ENCODE measurements at regions of chr17 and their contacts with region 1.

Region 1: GRCh38 chr17:63600569-63601438 is at the start of gene TACO1:
- DNase-seq: peak; percentile 57 to 86 (median 73)
- ATAC-seq: peak; percentile 84
- H3K4me3 ChIP-seq: peak within 1 kb of the TSS; percentile 94
- H3K4me3 Mint-ChIP-seq: peak within 1 kb of the TSS; percentile 90
- H3K27ac ChIP-seq: peak within 1 kb of the TSS; percentile 60 to 69
- H3K27ac Mint-ChIP-seq: peak within 1 kb of the TSS; percentile 87
- H3K4me1 ChIP-seq: peaks cover 45% of the 10 kb centered on the region
- H3K4me1 Mint-ChIP-seq: peaks cover 40% of the 10 kb centered on the region
- H3K27me3 ChIP-seq: no peaks in the 10 kb centered on the region
- H3K27me3 Mint-ChIP-seq: no peaks in the 10 kb centered on the region
- CTCF ChIP-seq: no peak
- total RNA-seq, gene TACO1: 11.3 to 13.2 TPM

Region 2: DNA sequence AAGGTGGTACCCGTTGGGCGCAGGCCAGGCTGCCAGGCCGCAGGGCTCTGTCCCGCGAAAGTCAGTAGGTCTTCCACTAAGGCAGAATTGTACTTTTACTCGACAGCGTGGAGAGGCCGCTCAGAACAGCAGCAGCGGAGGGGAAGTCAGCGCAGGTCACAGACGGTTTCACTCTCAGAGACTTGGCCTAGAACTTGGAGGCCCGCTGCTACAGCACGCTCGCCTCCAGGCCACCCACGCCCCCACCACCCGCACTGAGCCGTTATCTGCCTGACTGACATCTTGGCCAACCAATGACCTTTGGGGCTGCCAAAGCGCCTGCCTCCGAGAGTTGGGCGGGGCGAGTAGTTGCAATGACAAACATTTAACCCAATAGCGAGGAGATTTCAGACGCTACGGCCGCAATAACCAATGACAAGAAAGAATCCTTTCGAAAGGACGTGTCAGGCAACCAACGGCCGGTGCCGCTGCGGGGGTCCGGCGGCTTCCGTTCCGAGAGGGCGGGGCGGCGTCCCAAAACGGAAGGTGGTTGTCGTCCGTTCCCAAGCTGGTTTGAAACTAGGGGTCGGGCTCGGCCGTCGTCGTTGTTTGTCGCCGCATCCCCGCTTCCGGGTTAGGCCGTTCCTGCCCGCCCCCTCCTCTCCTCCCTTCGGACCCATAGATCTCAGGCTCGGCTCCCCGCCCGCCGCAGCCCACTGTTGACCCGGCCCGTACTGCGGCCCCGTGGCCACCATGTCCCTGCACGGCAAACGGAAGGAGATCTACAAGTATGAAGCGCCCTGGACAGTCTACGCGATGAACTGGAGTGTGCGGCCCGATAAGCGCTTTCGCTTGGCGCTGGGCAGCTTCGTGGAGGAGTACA is 50.6 kb before region 1 on chr17 and contains the start of gene DCAF7:
- CTCF ChIA-PET with region 1: no interaction called
- POLR2A ChIA-PET with region 1: interaction called, 9 read pairs
- intact Hi-C with region 1: loop called in 1 of 2 experiments (anchors 2 kb)
- DNase-seq: peak; percentile 97 to 100 (median 99)
- ATAC-seq: peak; percentile 95
- H3K4me3 ChIP-seq: peak within 1 kb of the TSS; percentile 89
- H3K4me3 Mint-ChIP-seq: peak within 1 kb of the TSS; percentile 98
- H3K27ac ChIP-seq: peak within 1 kb of the TSS; percentile 90 to 91
- H3K27ac Mint-ChIP-seq: peak within 1 kb of the TSS; percentile 88
- H3K4me1 ChIP-seq: peaks cover 38% of the 10 kb centered on the region
- H3K4me1 Mint-ChIP-seq: peaks cover 52% of the 10 kb centered on the region
- H3K27me3 ChIP-seq: no peaks in the 10 kb centered on the region
- H3K27me3 Mint-ChIP-seq: no peaks in the 10 kb centered on the region
- CTCF ChIP-seq: no peak
- total RNA-seq, gene DCAF7: 11.3 to 11.9 TPM

Region 3: DNA sequence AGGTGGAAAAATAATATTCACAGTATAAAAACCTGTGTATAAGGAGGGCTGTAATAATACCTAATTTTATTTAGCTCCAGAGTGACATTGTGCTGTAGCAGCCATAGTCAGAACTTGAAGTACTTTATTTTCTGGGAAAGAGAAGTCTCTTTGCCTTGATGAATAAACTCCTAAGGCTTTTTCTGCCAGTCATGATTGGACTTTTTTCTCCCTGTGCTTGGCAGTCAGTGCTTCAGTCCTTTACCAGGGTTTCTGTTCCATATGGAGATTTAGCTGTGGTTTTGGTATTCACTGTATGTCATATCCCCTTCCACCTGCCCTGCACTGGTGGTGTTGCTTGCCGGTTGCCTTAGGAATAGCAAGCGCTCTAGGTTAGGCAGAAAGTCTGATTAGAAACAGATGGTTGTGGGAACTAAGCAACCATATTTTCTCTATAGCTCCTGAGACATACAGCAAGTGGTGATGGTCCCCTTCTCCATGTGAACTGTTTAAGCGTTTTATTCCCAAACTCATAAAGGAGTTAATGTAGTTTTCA is 197.8 kb after region 1 on chr17:
- CTCF ChIA-PET with region 1: no interaction called
- POLR2A ChIA-PET with region 1: no interaction called
- intact Hi-C with region 1: no loop called
- DNase-seq: no peak
- ATAC-seq: no peak
- H3K4me3 ChIP-seq: no peak overlapping the region
- H3K4me3 Mint-ChIP-seq: no peak overlapping the region
- H3K27ac ChIP-seq: no peak overlapping the region
- H3K27ac Mint-ChIP-seq: no peak overlapping the region
- H3K4me1 ChIP-seq: peaks cover 2% of the 10 kb centered on the region
- H3K4me1 Mint-ChIP-seq: no peaks in the 10 kb centered on the region
- H3K27me3 ChIP-seq: no peaks in the 10 kb centered on the region
- H3K27me3 Mint-ChIP-seq: no peaks in the 10 kb centered on the region
- CTCF ChIP-seq: no peak